T-cell (primary cell): ENCODE measurements at regions of chr3 and their contacts with region 1.

Region 1: DNA sequence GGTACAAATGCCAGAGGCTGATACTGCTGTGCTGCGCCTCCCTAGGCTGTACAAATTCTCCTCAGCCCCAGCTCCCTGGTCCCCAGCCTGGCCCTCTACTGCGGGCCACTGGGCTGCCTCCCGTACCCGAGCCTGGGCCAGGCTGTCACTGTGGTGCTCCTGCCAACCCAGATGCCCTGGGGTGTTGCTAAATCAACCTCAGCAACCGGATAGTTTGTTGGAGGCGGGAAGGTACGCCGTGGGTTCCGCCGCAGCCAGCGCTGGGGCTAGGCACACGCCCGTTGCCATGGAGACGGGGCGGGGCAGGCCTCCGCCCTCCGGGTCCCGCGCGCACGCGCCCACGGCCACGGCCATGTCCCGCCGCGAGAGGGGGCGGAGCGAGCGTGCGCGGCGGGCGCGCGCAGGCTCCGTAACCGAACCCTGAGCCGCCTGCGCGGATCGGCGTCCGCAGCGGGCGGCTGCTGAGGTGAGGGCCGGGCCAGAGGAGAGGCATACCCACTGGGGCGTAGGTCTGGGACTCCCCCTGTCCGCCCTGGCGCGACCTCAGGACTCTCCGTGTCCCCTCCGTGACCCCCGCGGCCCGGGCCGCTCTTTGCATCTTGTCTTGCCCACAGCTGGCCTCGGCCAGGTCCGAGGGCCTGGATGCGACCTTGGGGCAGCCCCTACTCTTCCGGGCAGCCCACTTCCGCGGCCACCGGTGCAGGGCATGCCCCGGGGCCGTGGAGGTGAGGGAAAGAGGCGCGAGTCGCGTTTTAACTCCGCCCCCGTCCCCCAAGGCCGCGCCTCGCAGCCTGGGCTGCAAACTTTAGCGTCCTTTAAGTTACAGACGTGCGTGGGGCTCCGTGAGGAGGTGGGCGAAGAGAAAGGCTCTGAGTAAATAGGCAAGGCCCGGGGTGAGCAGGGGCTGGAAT is at the start of gene TEX264:
- DNase-seq: peak; percentile 87 to 99 (median 93)
- ATAC-seq: peak; percentile 80 to 85 (median 82)
- H3K4me3 ChIP-seq: peak within 1 kb of the TSS; percentile 75 to 89
- H3K4me3 Mint-ChIP-seq: peak within 1 kb of the TSS; percentile 83 to 92 (median 88)
- H3K27ac ChIP-seq: peak within 1 kb of the TSS; percentile 81
- H3K27ac Mint-ChIP-seq: peak within 1 kb of the TSS; percentile 92 to 93
- H3K4me1 ChIP-seq: peaks cover 20 to 66% of the 10 kb centered on the region in 2 experiments
- H3K4me1 Mint-ChIP-seq: peaks cover 65 to 69% (median 68%) of the 10 kb centered on the region in 3 donors
- H3K27me3 ChIP-seq: no peaks in the 10 kb centered on the region
- H3K27me3 Mint-ChIP-seq: no peaks in the 10 kb centered on the region
- total RNA-seq, gene TEX264: 35.9 to 51.0 (median 47.0) TPM

Region 2: GRCh38 chr3:51637941-51638471 is 33.1 kb before region 1 on chr3:
- CTCF ChIA-PET with region 1: no interaction called
- POLR2A ChIA-PET with region 1: no interaction called
- DNase-seq: peak in 11 of 35 experiments; percentile 2 to 42 (median 5)
- ATAC-seq: peak in 2 of 4 experiments; percentile 24 to 48
- H3K4me3 ChIP-seq: no peak overlapping the region
- H3K4me3 Mint-ChIP-seq: no peak overlapping the region
- H3K27ac ChIP-seq: no peak overlapping the region
- H3K27ac Mint-ChIP-seq: no peak overlapping the region
- H3K4me1 ChIP-seq: no peaks in the 10 kb centered on the region
- H3K4me1 Mint-ChIP-seq: no peaks in the 10 kb centered on the region
- H3K27me3 ChIP-seq: no peaks in the 10 kb centered on the region
- H3K27me3 Mint-ChIP-seq: no peaks in the 10 kb centered on the region

Region 3: GRCh38 chr3:51682079-51682478 is 11.0 kb after region 1 on chr3:
- CTCF ChIA-PET with region 1: interaction called, 14 to 33 read pairs
- POLR2A ChIA-PET with region 1: interaction called, 5 to 9 read pairs
- DNase-seq: peak; percentile 45 to 91 (median 70)
- ATAC-seq: peak; percentile 69 to 79 (median 73)
- H3K4me3 ChIP-seq: peak overlapping the region; percentile 25 to 46
- H3K4me3 Mint-ChIP-seq: peak overlapping the region; percentile 55 to 92 (median 58)
- H3K27ac ChIP-seq: peak overlapping the region; percentile 58
- H3K27ac Mint-ChIP-seq: peak overlapping the region; percentile 78 to 79
- H3K4me1 ChIP-seq: peaks cover 67 to 99% of the 10 kb centered on the region in 2 experiments
- H3K4me1 Mint-ChIP-seq: peaks cover 94 to 97% (median 96%) of the 10 kb centered on the region in 3 donors
- H3K27me3 ChIP-seq: no peaks in the 10 kb centered on the region
- H3K27me3 Mint-ChIP-seq: no peaks in the 10 kb centered on the region

Region 4: GRCh38 chr3:52453496-52454249 is 782.6 kb after region 1 on chr3 and contains the start of gene TNNC1:
- CTCF ChIA-PET with region 1: interaction called in 1 of 2 experiments, 11 read pairs
- POLR2A ChIA-PET with region 1: no interaction called
- DNase-seq: no peak
- ATAC-seq: no peak
- H3K4me3 ChIP-seq: peak within 1 kb of the TSS; percentile 53 to 97
- H3K4me3 Mint-ChIP-seq: peak within 1 kb of the TSS; percentile 89 to 98 (median 91)
- H3K27ac ChIP-seq: peak within 1 kb of the TSS; percentile 99
- H3K27ac Mint-ChIP-seq: peak within 1 kb of the TSS; percentile 97 to 98
- H3K4me1 ChIP-seq: peaks cover 12 to 44% of the 10 kb centered on the region in 2 experiments
- H3K4me1 Mint-ChIP-seq: peaks cover 30 to 44% (median 40%) of the 10 kb centered on the region in 3 donors
- H3K27me3 ChIP-seq: no peaks in the 10 kb centered on the region
- H3K27me3 Mint-ChIP-seq: no peaks in the 10 kb centered on the region
- total RNA-seq, gene TNNC1: 2.8 to 8.8 (median 4.5) TPM